ENCODE measurements at regions of chr15 and their contacts with region 1.

Region 1: DNA sequence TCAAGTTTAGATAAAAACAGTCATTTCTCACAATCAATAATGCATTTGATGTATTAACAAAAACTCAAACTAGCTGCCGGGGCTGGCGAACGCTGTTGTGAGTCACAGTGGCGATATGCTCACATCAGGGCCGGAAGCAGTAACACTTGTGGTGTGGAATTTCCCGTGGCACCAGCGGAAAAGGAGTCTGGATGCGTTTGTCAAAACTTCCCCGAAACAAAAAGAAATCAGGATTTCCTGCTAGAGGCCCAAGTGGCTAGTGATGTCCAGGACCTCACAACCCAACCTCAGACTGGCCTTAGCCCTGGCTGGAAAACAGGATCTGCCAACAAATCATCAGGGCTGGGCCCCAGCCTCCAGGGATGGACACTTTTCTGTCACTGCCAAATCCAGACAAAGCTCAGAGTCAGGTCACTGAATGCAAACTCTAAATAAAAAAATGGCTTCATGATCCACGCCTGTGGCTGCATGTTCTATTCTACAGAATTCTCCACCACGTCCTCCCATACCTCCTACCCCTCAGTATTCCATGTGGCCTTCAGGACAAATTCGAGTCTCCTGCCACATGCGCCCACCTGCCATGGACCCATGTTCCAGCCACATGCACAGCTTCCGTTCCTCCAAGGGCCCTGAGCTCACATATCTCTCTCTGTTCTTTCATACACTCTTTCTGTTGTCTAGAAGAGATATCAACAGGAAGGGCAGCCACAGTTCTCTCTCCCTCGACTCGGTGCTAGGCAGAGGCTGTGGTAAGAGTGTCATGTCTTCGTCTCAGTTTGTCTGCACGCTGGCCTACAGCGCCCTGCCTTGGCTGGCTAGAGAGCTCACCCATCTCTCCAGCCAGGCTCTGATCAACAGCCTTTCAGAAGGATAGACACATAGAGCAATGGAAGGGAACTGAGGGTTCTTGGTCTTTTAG is 35.4 kb downstream of the EHD4 start:
- DNase-seq: peak; percentile 86
- ATAC-seq: peak; percentile 73
- H3K4me3 Mint-ChIP-seq: peak overlapping the region; percentile 45
- H3K27ac Mint-ChIP-seq: peak overlapping the region; percentile 98
- H3K4me1 Mint-ChIP-seq: peaks cover 60% of the 10 kb centered on the region
- H3K27me3 Mint-ChIP-seq: no peaks in the 10 kb centered on the region
- CTCF ChIP-seq: no peak

Region 2: GRCh38 chr15:41923401-41923997 is 13.4 kb before region 1 on chr15:
- CTCF ChIA-PET with region 1: interaction called, 5 read pairs
- POLR2A ChIA-PET with region 1: interaction called, 12 read pairs
- intact Hi-C with region 1: no loop called
- DNase-seq: no peak
- ATAC-seq: no peak
- H3K4me3 Mint-ChIP-seq: no peak overlapping the region
- H3K27ac Mint-ChIP-seq: no peak overlapping the region
- H3K4me1 Mint-ChIP-seq: peaks cover 10% of the 10 kb centered on the region
- H3K27me3 Mint-ChIP-seq: no peaks in the 10 kb centered on the region
- CTCF ChIP-seq: no peak

Region 3: GRCh38 chr15:41972253-41973242 is 35.6 kb after region 1 on chr15 and contains the start of gene EHD4:
- CTCF ChIA-PET with region 1: interaction called, 7 read pairs
- POLR2A ChIA-PET with region 1: interaction called, 44 read pairs
- intact Hi-C with region 1: loop called (anchors 2 kb)
- DNase-seq: peak; percentile 99
- ATAC-seq: peak; percentile 84
- H3K4me3 Mint-ChIP-seq: peak within 1 kb of the TSS; percentile 86
- H3K27ac Mint-ChIP-seq: peak within 1 kb of the TSS; percentile 94
- H3K4me1 Mint-ChIP-seq: peaks cover 41% of the 10 kb centered on the region
- H3K27me3 Mint-ChIP-seq: peaks cover 13% of the 10 kb centered on the region
- CTCF ChIP-seq: no peak
- total RNA-seq, gene EHD4: 22.3 to 22.6 TPM